ENCODE measurements at regions of chr11 and their contacts with region 1.

Region 1: DNA sequence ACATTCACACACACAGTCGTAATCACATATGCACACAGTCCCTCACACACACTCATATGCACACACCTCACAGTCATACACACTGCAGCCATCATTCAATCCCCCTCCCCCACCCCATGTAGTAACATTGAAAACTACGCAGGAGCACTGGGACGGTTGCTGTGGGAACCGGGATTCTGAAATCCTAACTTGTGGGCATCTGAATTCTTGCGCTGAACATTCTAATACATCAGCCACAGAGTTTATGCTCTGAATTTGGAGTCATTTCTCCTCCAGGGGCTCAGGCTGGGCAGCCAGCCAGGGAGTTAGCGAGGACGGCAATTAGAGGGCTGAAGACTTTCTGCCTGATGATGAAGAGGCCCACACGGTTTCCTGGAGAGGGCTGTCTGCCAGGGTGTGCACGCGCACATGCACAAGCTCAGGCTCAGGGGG is 32.7 kb downstream of the CD6 start:
- DNase-seq: peak; percentile 78
- ATAC-seq: peak; percentile 58
- H3K4me3 Mint-ChIP-seq: peak overlapping the region; percentile 74
- H3K27ac Mint-ChIP-seq: peak overlapping the region; percentile 94
- H3K4me1 Mint-ChIP-seq: peaks cover 90% of the 10 kb centered on the region
- H3K27me3 Mint-ChIP-seq: no peaks in the 10 kb centered on the region

Region 2: GRCh38 chr11:60992842-60993409 is 11.3 kb before region 1 on chr11:
- CTCF ChIA-PET with region 1: interaction called, 6 read pairs
- POLR2A ChIA-PET with region 1: interaction called, 8 read pairs
- intact Hi-C with region 1: loop called in 1 of 2 experiments (anchors 1 kb)
- DNase-seq: peak; percentile 18
- ATAC-seq: no peak
- H3K4me3 Mint-ChIP-seq: peak overlapping the region; percentile 61
- H3K27ac Mint-ChIP-seq: peak overlapping the region; percentile 97
- H3K4me1 Mint-ChIP-seq: peaks cover 83% of the 10 kb centered on the region
- H3K27me3 Mint-ChIP-seq: no peaks in the 10 kb centered on the region

Region 3: GRCh38 chr11:61021661-61022212 is 17.5 kb after region 1 on chr11:
- CTCF ChIA-PET with region 1: interaction called, 3 read pairs
- POLR2A ChIA-PET with region 1: interaction called, 3 read pairs
- intact Hi-C with region 1: loop called (anchors 1 to 2 kb)
- DNase-seq: peak; percentile 94
- ATAC-seq: peak; percentile 50
- H3K4me3 Mint-ChIP-seq: peak overlapping the region; percentile 79
- H3K27ac Mint-ChIP-seq: peak overlapping the region; percentile 97
- H3K4me1 Mint-ChIP-seq: peaks cover 92% of the 10 kb centered on the region
- H3K27me3 Mint-ChIP-seq: no peaks in the 10 kb centered on the region